ENCODE measurements at regions of chr10 and their contacts with region 1.

Region 1: GRCh38 chr10:69375307-69376151 is 41.2 kb downstream of the TACR2 start:
- DNase-seq: no peak
- H3K4me3 ChIP-seq: no peak overlapping the region
- H3K27ac ChIP-seq: peak overlapping the region; percentile 70
- H3K4me1 ChIP-seq: peaks cover 47% of the 10 kb centered on the region
- H3K27me3 ChIP-seq: no peaks in the 10 kb centered on the region
- CTCF ChIP-seq: no peak
- POLR2A ChIP-seq: no peak

Region 2: GRCh38 chr10:69318106-69318866 is 57.2 kb before region 1 on chr10:
- intact Hi-C with region 1: loop called (anchors 5 kb)
- DNase-seq: no peak
- H3K4me3 ChIP-seq: peak overlapping the region; percentile 71 to 94
- H3K27ac ChIP-seq: peak overlapping the region; percentile 95
- H3K4me1 ChIP-seq: peaks cover 48% of the 10 kb centered on the region
- H3K27me3 ChIP-seq: no peaks in the 10 kb centered on the region
- CTCF ChIP-seq: no peak
- POLR2A ChIP-seq: no peak

Measured in vagina (tissue), 2 donors.